ENCODE measurements at regions of chr17 and their contacts with region 1.

Region 1: GRCh38 chr17:65231662-65232335 is 94.6 kb downstream of the RGS9 start:
- DNase-seq: peak; percentile 12
- ATAC-seq: peak; percentile 72
- H3K4me3 ChIP-seq: no peak overlapping the region
- H3K27ac ChIP-seq: no peak overlapping the region
- H3K4me1 ChIP-seq: peaks cover 20% of the 10 kb centered on the region
- H3K27me3 ChIP-seq: no peaks in the 10 kb centered on the region
- CTCF ChIP-seq: peak; percentile 72 to 87 (median 81)
- EP300 ChIP-seq: no peak
- POLR2A ChIP-seq: no peak
- RAD21 ChIP-seq: peak; percentile 94

Region 2: GRCh38 chr17:65191811-65192740 is 39.7 kb before region 1 on chr17:
- CTCF ChIA-PET with region 1: no interaction called
- POLR2A ChIA-PET with region 1: no interaction called
- RAD21 ChIA-PET with region 1: no interaction called
- SMC1A ChIA-PET with region 1: no interaction called
- in situ Hi-C with region 1: no loop called
- intact Hi-C with region 1: no loop called
- DNase-seq: no peak
- ATAC-seq: no peak
- H3K4me3 ChIP-seq: no peak overlapping the region
- H3K27ac ChIP-seq: no peak overlapping the region
- H3K4me1 ChIP-seq: peaks cover 3% of the 10 kb centered on the region; the same call in 1 of the 2 replicates
- H3K27me3 ChIP-seq: no peaks in the 10 kb centered on the region
- CTCF ChIP-seq: no peak
- EP300 ChIP-seq: no peak
- POLR2A ChIP-seq: no peak
- RAD21 ChIP-seq: no peak

Region 3: GRCh38 chr17:65219124-65219523 is 12.7 kb before region 1 on chr17:
- CTCF ChIA-PET with region 1: interaction called, 12 read pairs
- POLR2A ChIA-PET with region 1: interaction called, 3 read pairs
- RAD21 ChIA-PET with region 1: interaction called, 3 read pairs
- SMC1A ChIA-PET with region 1: interaction called, 11 read pairs
- in situ Hi-C with region 1: no loop called
- intact Hi-C with region 1: no loop called
- DNase-seq: no peak
- ATAC-seq: no peak
- H3K4me3 ChIP-seq: no peak overlapping the region
- H3K27ac ChIP-seq: no peak overlapping the region
- H3K4me1 ChIP-seq: no peaks in the 10 kb centered on the region
- H3K27me3 ChIP-seq: no peaks in the 10 kb centered on the region; a peak in 1 of 4 replicates
- CTCF ChIP-seq: peak in 2 of 3 experiments; percentile 24 to 32; a peak in 2 of 6 replicates
- EP300 ChIP-seq: no peak
- POLR2A ChIP-seq: no peak
- RAD21 ChIP-seq: 0 out of 2 replicates have a peak, but pooled peaks have one; percentile 11

Region 4: GRCh38 chr17:65294179-65294720 is 62.5 kb after region 1 on chr17:
- CTCF ChIA-PET with region 1: interaction called, 16 read pairs
- POLR2A ChIA-PET with region 1: no interaction called
- RAD21 ChIA-PET with region 1: interaction called, 10 read pairs
- SMC1A ChIA-PET with region 1: interaction called, 4 read pairs
- in situ Hi-C with region 1: no loop called
- intact Hi-C with region 1: no loop called
- DNase-seq: no peak
- ATAC-seq: peak; percentile 99
- H3K4me3 ChIP-seq: no peak overlapping the region
- H3K27ac ChIP-seq: no peak overlapping the region
- H3K4me1 ChIP-seq: no peaks in the 10 kb centered on the region
- H3K27me3 ChIP-seq: no peaks in the 10 kb centered on the region
- CTCF ChIP-seq: peak; percentile 82 to 87 (median 85)
- EP300 ChIP-seq: no peak
- POLR2A ChIP-seq: no peak
- RAD21 ChIP-seq: peak; percentile 88

Region 5: GRCh38 chr17:65988081-65988850 is 756.5 kb after region 1 on chr17:
- CTCF ChIA-PET with region 1: interaction called, 10 read pairs
- POLR2A ChIA-PET with region 1: no interaction called
- RAD21 ChIA-PET with region 1: interaction called, 5 read pairs
- SMC1A ChIA-PET with region 1: interaction called, 10 read pairs
- in situ Hi-C with region 1: no loop called
- intact Hi-C with region 1: loop called (anchors 1 kb)
- DNase-seq: peak; percentile 5
- ATAC-seq: peak; percentile 62
- H3K4me3 ChIP-seq: no peak overlapping the region
- H3K27ac ChIP-seq: no peak overlapping the region
- H3K4me1 ChIP-seq: no peaks in the 10 kb centered on the region
- H3K27me3 ChIP-seq: no peaks in the 10 kb centered on the region
- CTCF ChIP-seq: peak; percentile 42 to 53 (median 51); a peak in 5 of 6 replicates
- EP300 ChIP-seq: no peak
- POLR2A ChIP-seq: no peak
- RAD21 ChIP-seq: peak; percentile 81

Region 6: DNA sequence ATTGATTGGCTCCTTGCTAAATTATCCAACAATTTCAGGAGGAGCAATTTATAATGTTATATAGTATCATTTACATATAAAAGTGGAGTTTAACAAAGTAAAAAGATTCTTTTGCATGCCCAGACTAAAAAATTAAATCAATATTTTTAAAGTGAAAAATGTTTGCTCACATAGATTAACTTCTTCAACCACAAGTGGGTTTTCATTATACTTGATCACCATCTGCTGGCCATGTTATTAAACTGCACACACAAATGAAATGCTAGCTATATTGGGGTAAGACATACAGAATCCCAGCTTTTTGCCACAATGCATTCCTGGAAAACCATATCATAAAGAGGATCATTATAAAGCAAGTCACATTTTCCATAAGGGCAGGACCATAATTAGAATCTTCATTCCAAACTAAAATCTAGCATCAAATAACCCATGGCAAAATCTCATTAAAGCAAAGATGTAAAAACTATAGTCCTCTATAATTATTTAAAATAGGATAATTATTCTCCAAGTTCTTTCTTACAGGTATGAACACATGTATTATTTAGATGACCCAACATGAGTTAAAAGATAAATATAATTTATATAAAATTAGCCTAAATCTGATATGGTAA is 933.8 kb after region 1 on chr17:
- CTCF ChIA-PET with region 1: interaction called, 60 read pairs
- POLR2A ChIA-PET with region 1: no interaction called
- RAD21 ChIA-PET with region 1: interaction called, 31 read pairs
- SMC1A ChIA-PET with region 1: interaction called, 20 read pairs
- in situ Hi-C with region 1: loop called (anchors 5 kb)
- intact Hi-C with region 1: loop called (anchors 2 kb)
- DNase-seq: peak; percentile 5
- ATAC-seq: peak; percentile 53; the same call in 2 of the 3 replicates
- H3K4me3 ChIP-seq: no peak overlapping the region
- H3K27ac ChIP-seq: no peak overlapping the region
- H3K4me1 ChIP-seq: no peaks in the 10 kb centered on the region
- H3K27me3 ChIP-seq: no peaks in the 10 kb centered on the region; a peak in 1 of 4 replicates
- CTCF ChIP-seq: peak; percentile 54 to 73 (median 56); a peak in 5 of 6 replicates
- EP300 ChIP-seq: no peak
- POLR2A ChIP-seq: no peak
- RAD21 ChIP-seq: peak; percentile 91